ENCODE measurements at regions of chr17 and their contacts with region 1.

Region 1: GRCh38 chr17:11644261-11645212 is 46.3 kb downstream of the DNAH9 start:
- DNase-seq: peak; percentile 94
- H3K4me3 ChIP-seq: no peak overlapping the region
- H3K27ac ChIP-seq: no peak overlapping the region
- H3K4me1 ChIP-seq: peaks cover 35% of the 10 kb centered on the region
- H3K27me3 ChIP-seq: no peaks in the 10 kb centered on the region
- CTCF ChIP-seq: peak; percentile 94

Region 2: GRCh38 chr17:11144358-11145233 is 499.9 kb before region 1 on chr17:
- CTCF ChIA-PET with region 1: interaction called, 10 read pairs
- POLR2A ChIA-PET with region 1: no interaction called
- intact Hi-C with region 1: no loop called
- DNase-seq: peak; percentile 83
- H3K4me3 ChIP-seq: no peak overlapping the region
- H3K27ac ChIP-seq: no peak overlapping the region
- H3K4me1 ChIP-seq: peaks cover 9% of the 10 kb centered on the region
- H3K27me3 ChIP-seq: no peaks in the 10 kb centered on the region
- CTCF ChIP-seq: peak; percentile 88

Region 3: GRCh38 chr17:11742886-11743285 is 98.3 kb after region 1 on chr17:
- CTCF ChIA-PET with region 1: interaction called, 11 read pairs
- POLR2A ChIA-PET with region 1: no interaction called
- intact Hi-C with region 1: no loop called
- DNase-seq: peak; percentile 81
- H3K4me3 ChIP-seq: no peak overlapping the region
- H3K27ac ChIP-seq: no peak overlapping the region
- H3K4me1 ChIP-seq: peaks cover 37% of the 10 kb centered on the region
- H3K27me3 ChIP-seq: no peaks in the 10 kb centered on the region
- CTCF ChIP-seq: peak; percentile 79

Region 4: DNA sequence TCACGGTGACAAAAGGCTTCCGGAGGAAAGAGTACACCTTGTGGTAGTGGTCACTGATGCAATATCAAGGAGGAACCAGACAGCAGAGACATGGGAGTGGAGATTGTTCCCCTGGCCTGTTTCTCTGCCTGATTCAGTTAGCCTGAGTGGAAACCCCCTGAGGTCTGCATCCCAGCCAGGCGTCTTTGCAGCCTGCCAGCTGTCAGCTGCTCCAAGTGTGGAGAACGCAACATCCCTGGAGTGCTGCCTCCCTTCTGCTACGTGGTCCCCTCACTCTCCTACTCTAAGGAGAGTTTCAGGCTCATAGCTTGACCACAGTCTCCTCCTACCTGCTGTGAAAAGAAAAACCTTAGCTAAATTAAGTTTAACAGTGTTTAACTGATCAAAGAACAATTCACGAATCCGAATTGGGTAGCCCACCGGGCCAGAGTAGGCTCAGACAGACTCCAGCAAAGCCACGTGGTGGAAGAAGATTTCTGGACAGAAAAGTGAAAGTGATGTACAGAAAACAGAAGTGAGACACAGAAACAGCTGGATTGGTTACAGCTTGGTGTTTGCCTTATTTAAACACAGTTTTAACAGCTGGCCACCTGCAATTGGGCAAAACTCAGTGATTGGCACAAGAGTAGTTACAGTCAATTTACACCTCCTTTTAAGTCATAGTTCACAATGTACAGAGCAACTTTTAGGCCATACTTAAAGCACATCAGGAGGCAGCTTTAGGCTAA is 142.3 kb after region 1 on chr17:
- CTCF ChIA-PET with region 1: no interaction called
- POLR2A ChIA-PET with region 1: no interaction called
- intact Hi-C with region 1: no loop called
- DNase-seq: no peak
- H3K4me3 ChIP-seq: no peak overlapping the region
- H3K27ac ChIP-seq: no peak overlapping the region
- H3K4me1 ChIP-seq: no peaks in the 10 kb centered on the region
- H3K27me3 ChIP-seq: no peaks in the 10 kb centered on the region
- CTCF ChIP-seq: no peak

Measured in A673 (cell line).